AG04449 (cell line): ENCODE measurements at regions of chr1 and their contacts with region 1.

Region 1: GRCh38 chr1:201206176-201206575 is 15.6 kb downstream of the IGFN1 start:
- DNase-seq: no peak
- H3K4me3 ChIP-seq: no peak overlapping the region
- CTCF ChIP-seq: no peak

Region 2: GRCh38 chr1:201219481-201220359 is 13.5 kb after region 1 on chr1:
- CTCF ChIA-PET with region 1: interaction called, 10 read pairs
- POLR2A ChIA-PET with region 1: no interaction called
- DNase-seq: no peak
- H3K4me3 ChIP-seq: no peak overlapping the region
- CTCF ChIP-seq: no peak

Region 3: DNA sequence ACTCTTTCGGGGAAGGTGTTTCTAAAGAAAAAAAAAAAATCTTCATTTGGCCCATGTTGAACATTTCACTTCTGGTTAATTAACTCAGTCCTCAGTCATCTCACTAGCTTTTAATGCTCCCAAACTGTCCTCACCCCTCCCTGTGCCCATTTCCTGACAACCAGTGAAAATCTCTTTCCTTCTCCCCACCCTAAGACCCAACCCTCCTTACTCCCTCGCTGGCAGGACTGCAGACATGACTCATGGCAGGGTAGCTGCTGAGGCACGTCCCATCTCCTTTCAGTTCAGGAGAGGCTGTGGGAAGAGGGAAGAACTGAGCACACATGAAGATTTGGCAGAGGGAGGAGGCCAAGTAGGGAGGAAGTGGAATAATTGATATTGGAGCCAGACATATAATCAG is 89.7 kb after region 1 on chr1:
- CTCF ChIA-PET with region 1: no interaction called
- POLR2A ChIA-PET with region 1: no interaction called
- DNase-seq: peak; percentile 42
- H3K4me3 ChIP-seq: no peak overlapping the region
- CTCF ChIP-seq: no peak